Stomach (tissue), 19 donors: ENCODE measurements at regions of chr15 and their contacts with region 1.

Region 1: GRCh38 chr15:89430530-89431341 is 65.6 kb downstream of the RHCG start:
- DNase-seq: peak; percentile 91 to 92
- H3K4me3 ChIP-seq: peak overlapping the region; percentile 33 to 55 (median 42)
- H3K27ac ChIP-seq: no peak overlapping the region
- H3K4me1 ChIP-seq: peaks cover 0 to 12% (median 10%) of the 10 kb centered on the region in 4 donors
- H3K27me3 ChIP-seq: peaks cover 0 to 49% (median 4%) of the 10 kb centered on the region in 3 donors
- CTCF ChIP-seq: peak in 6 of 7 experiments; percentile 97 to 100 (median 99)
- EP300 ChIP-seq: no peak
- POLR2A ChIP-seq: no peak

Region 2: GRCh38 chr15:89171136-89172072 is 259.3 kb before region 1 on chr15:
- intact Hi-C with region 1: no loop called
- DNase-seq: peak; percentile 71 to 84
- H3K4me3 ChIP-seq: no peak overlapping the region
- H3K27ac ChIP-seq: peak overlapping the region in 1 of 5 donors; percentile 14
- H3K4me1 ChIP-seq: peaks cover 17 to 47% (median 31%) of the 10 kb centered on the region in 4 donors
- H3K27me3 ChIP-seq: no peaks in the 10 kb centered on the region
- CTCF ChIP-seq: peak in 5 of 7 experiments; percentile 54 to 79 (median 72)
- EP300 ChIP-seq: no peak
- POLR2A ChIP-seq: no peak

Region 3: GRCh38 chr15:89299896-89300295 is 130.8 kb before region 1 on chr15:
- intact Hi-C with region 1: no loop called
- DNase-seq: peak in 1 of 2 donors; percentile 37
- H3K4me3 ChIP-seq: no peak overlapping the region
- H3K27ac ChIP-seq: no peak overlapping the region
- H3K4me1 ChIP-seq: no peaks in the 10 kb centered on the region
- H3K27me3 ChIP-seq: no peaks in the 10 kb centered on the region
- CTCF ChIP-seq: no peak
- EP300 ChIP-seq: no peak
- POLR2A ChIP-seq: no peak

Region 4: DNA sequence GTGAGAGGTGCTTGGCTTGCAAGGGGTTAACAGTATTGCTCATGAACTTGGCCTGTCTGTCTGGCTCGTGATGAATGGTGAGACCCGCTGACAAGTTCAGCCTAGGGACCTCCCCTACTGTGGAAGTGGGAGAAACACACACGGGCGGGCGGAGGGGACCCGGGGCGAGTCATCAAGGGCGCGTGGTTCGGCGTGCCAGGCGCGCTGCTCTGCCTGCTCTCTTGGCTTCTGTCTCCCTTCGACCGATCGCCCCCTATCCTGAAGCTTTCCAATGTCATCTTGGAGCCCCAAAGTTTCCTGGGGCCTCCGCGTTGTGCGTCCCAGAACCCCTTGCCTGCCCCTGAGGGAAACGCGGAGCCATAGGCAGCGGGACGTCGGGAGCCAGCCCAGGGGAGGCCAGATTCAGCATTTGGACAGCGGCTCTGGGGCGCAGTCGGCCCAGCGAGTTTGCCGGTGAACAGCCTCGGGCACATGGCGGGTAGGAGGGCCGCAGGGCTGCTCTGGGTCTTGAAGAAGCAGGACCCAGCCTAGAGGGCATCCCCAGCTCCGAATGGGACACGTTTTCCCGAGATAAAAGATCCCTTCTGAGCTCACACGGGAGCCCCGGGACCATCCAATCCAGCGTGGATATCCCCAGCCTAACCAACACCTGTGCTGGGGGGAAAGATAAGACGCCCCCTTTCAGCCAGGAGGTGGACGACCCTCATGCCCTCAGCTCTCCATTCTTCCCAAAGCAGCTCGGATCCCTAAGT is 69.1 kb before region 1 on chr15:
- intact Hi-C with region 1: loop called (anchors 5 kb)
- DNase-seq: peak; percentile 59 to 92
- H3K4me3 ChIP-seq: peak overlapping the region in 2 of 4 donors; percentile 16 to 27
- H3K27ac ChIP-seq: no peak overlapping the region
- H3K4me1 ChIP-seq: peaks cover 16 to 35% (median 29%) of the 10 kb centered on the region in 4 donors
- H3K27me3 ChIP-seq: peaks cover 56 to 100% (median 98%) of the 10 kb centered on the region in 3 donors
- CTCF ChIP-seq: no peak
- EP300 ChIP-seq: no peak
- POLR2A ChIP-seq: no peak

Region 5: DNA sequence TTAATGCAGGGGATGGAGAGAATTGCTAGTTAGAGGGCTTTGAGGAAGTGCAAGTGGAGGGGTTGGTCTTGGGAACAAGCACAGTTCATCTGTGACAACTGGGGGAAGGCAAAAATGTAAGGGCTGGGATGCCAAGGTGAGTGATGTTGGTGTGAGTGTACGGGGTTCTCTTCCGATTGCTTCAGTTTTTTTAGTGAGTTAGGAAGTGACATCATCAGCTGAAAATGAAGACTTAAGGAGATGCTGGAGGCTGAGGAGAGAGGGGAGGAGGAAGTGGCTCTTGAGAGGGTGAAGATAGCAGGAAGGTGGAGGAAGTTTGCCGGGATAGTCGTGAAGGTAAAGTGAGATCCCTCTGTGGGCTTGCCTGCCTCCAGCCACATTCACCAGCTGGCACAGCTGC is 157.2 kb after region 1 on chr15:
- intact Hi-C with region 1: no loop called
- DNase-seq: no peak
- H3K4me3 ChIP-seq: no peak overlapping the region
- H3K27ac ChIP-seq: no peak overlapping the region
- H3K4me1 ChIP-seq: no peaks in the 10 kb centered on the region
- H3K27me3 ChIP-seq: no peaks in the 10 kb centered on the region
- CTCF ChIP-seq: no peak
- EP300 ChIP-seq: no peak
- POLR2A ChIP-seq: no peak